HCT116 (cell line): ENCODE measurements at regions of chr3 and their contacts with region 1.

Region 1: DNA sequence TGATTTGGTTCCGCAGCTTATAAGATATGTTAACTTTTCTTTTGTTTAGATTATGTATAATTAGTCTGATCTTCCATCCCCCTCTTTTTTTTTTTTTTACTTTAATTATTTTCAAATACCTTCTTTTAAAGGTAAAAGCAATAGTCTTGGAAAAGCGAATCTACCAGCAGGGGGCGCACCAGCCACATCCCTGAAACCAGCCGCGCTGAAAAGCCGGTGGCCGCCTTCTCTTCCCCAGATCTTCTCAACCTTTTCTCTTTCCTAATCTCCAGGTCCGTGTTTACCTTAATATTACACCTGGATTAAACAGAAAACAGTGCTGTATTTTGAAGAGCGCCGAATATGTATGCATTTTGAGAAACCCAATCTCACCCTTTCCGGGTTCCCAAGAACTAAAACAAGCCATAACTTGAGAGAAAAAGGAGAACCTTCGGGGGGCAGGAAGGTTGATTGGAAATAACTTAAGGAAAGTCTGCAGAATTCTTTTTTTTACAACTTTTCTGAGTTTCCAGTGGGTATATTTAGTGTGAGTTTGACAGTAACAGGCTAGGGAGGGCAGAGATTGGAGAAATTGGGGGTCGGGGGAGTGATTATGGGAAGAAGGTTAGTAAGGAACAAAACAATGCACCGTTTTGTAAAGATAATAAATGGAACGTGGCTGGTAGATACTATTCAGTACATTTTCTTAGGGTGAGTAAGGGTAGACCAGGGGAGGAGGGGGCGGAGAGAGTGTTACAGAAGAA is 2.0 kb upstream of the SOX2 start:
- DNase-seq: peak; percentile 29
- ATAC-seq: peak; percentile 60
- H3K4me3 ChIP-seq: peak overlapping the region; percentile 21 to 26
- H3K27ac ChIP-seq: no peak overlapping the region
- H3K4me1 ChIP-seq: peaks cover 11 to 16% of the 10 kb centered on the region in 2 experiments; a peak in 2 of 4 replicates
- H3K27me3 ChIP-seq: no peaks in the 10 kb centered on the region
- CTCF ChIP-seq: peak; percentile 49 to 78 (median 75)
- POLR2A ChIP-seq: no peak
- RAD21 ChIP-seq: peak; percentile 89

Region 2: GRCh38 chr3:181859518-181859917 is 149.8 kb after region 1 on chr3:
- CTCF ChIA-PET with region 1: no interaction called
- POLR2A ChIA-PET with region 1: no interaction called
- RAD21 ChIA-PET with region 1: no interaction called
- intact Hi-C with region 1: no loop called
- DNase-seq: no peak
- ATAC-seq: no peak
- H3K4me3 ChIP-seq: no peak overlapping the region
- H3K27ac ChIP-seq: no peak overlapping the region
- H3K4me1 ChIP-seq: no peaks in the 10 kb centered on the region
- H3K27me3 ChIP-seq: no peaks in the 10 kb centered on the region
- CTCF ChIP-seq: no peak
- POLR2A ChIP-seq: no peak
- RAD21 ChIP-seq: no peak

Region 3: GRCh38 chr3:181935907-181936306 is 226.2 kb after region 1 on chr3:
- CTCF ChIA-PET with region 1: no interaction called
- POLR2A ChIA-PET with region 1: no interaction called
- RAD21 ChIA-PET with region 1: no interaction called
- intact Hi-C with region 1: loop called (anchors 5 kb)
- DNase-seq: no peak
- ATAC-seq: peak; percentile 55; the same call in 1 of the 2 replicates
- H3K4me3 ChIP-seq: no peak overlapping the region
- H3K27ac ChIP-seq: no peak overlapping the region
- H3K4me1 ChIP-seq: no peaks in the 10 kb centered on the region
- H3K27me3 ChIP-seq: no peaks in the 10 kb centered on the region
- CTCF ChIP-seq: peak in 2 of 3 experiments; percentile 3 to 16; a peak in 2 of 6 replicates
- POLR2A ChIP-seq: no peak
- RAD21 ChIP-seq: peak; percentile 41; the same call in 1 of the 2 replicates

Region 4: DNA sequence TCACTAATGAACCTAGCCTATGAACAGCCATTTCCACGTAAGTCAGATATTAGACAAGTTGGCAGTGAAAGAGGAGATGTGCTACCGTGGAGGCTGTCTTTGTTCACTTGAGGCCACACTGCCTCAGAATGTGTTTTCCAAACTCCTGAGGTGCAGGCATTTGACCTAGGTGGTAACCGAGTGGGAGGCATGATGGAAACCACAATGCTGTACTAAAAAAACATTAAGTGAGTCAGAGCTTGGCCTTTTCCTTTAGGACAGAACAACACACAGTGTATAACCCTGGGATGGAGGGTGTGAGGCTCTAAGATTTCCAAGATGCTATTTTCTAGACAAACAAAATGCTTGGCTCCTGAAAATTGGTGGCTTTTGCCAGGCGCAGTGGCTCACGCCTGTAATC is 408.4 kb after region 1 on chr3:
- CTCF ChIA-PET with region 1: no interaction called
- POLR2A ChIA-PET with region 1: no interaction called
- RAD21 ChIA-PET with region 1: no interaction called
- intact Hi-C with region 1: no loop called
- DNase-seq: no peak
- ATAC-seq: peak; percentile 49; the same call in 1 of the 2 replicates
- H3K4me3 ChIP-seq: no peak overlapping the region
- H3K27ac ChIP-seq: no peak overlapping the region
- H3K4me1 ChIP-seq: peaks cover 0 to 4% of the 10 kb centered on the region in 2 experiments; a peak in 1 of 4 replicates
- H3K27me3 ChIP-seq: no peaks in the 10 kb centered on the region
- CTCF ChIP-seq: no peak
- POLR2A ChIP-seq: no peak
- RAD21 ChIP-seq: no peak

Region 5: DNA sequence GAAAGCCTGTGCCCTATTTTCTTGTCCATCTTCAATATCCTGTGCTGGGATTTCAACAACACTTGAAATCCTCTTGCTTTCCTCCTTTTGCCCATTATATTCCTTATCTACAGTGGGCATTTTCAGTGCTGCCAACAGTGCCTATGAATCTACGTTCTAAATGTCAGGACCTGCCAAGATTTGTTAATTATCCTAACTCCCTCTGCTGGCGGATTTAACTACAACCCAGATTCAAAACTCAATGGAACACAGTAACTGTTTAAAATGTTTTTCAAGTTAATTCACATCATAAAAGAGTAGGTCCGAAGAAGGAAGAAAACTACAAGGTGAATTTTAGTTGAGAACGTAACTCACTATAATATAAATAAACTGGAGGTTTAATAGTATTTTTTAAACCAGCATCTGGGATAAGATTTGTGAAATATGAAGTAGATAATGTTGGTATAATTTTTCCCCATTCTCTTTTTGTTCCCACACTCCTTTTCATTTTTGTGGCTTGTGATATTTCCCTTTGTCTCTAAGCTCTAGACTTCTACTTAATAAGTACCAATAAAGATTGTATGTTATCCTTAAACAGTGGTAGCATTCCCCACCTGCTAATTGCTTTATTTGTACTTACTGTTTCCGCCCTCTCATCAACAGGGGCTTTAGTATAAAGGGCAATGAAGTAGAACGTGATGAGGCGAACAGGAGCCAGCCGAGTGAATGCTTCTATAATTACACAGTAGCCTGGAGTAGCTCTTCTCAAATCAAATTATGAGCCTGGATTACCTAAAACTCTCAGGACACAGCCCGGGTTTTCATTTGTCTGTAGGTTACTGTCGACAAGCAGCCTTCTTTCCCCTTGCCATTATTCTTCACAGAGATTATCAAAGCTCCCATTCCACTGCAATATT is 781.1 kb after region 1 on chr3:
- CTCF ChIA-PET with region 1: no interaction called
- POLR2A ChIA-PET with region 1: no interaction called
- RAD21 ChIA-PET with region 1: no interaction called
- intact Hi-C with region 1: loop called (anchors 5 kb)
- DNase-seq: peak; percentile 40
- ATAC-seq: peak; percentile 85
- H3K4me3 ChIP-seq: no peak overlapping the region
- H3K27ac ChIP-seq: no peak overlapping the region
- H3K4me1 ChIP-seq: no peaks in the 10 kb centered on the region
- H3K27me3 ChIP-seq: no peaks in the 10 kb centered on the region
- CTCF ChIP-seq: peak; percentile 54 to 72 (median 55)
- POLR2A ChIP-seq: no peak
- RAD21 ChIP-seq: peak; percentile 74